ENCODE measurements at regions of chr9 and their contacts with region 1.

Region 1: GRCh38 chr9:108786901-108787689 is 68.7 kb downstream of the ACTL7B start:
- DNase-seq: no peak
- H3K4me3 ChIP-seq: no peak overlapping the region
- H3K27ac ChIP-seq: no peak overlapping the region
- H3K4me1 ChIP-seq: no peaks in the 10 kb centered on the region
- H3K27me3 ChIP-seq: no peaks in the 10 kb centered on the region
- CTCF ChIP-seq: no peak
- EP300 ChIP-seq: no peak
- POLR2A ChIP-seq: no peak

Region 2: DNA sequence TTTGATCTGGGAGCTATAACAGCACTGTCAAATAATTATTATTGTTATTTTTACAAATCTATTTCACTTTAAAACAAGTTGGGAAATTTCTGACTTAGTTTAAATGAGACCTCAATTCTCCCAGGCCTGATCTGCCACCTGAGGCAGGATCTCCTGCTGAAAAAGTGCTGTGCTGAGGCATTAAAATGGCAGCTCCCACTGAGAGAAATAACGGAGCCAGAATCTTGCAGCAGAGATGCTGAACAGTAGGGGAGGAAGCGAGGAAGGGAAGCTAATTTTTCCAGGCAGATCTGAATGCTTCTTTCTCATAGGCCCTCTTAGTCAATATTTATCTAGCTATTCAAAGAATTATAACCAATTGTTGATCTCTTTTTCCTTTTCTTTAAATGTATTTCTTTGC is 1727.9 kb before region 1 on chr9:
- intact Hi-C with region 1: loop called in 1 of 4 experiments (anchors 10 kb)
- DNase-seq: no peak
- H3K4me3 ChIP-seq: no peak overlapping the region
- H3K27ac ChIP-seq: no peak overlapping the region
- H3K4me1 ChIP-seq: no peaks in the 10 kb centered on the region
- H3K27me3 ChIP-seq: no peaks in the 10 kb centered on the region
- CTCF ChIP-seq: no peak
- EP300 ChIP-seq: no peak
- POLR2A ChIP-seq: no peak

Region 3: DNA sequence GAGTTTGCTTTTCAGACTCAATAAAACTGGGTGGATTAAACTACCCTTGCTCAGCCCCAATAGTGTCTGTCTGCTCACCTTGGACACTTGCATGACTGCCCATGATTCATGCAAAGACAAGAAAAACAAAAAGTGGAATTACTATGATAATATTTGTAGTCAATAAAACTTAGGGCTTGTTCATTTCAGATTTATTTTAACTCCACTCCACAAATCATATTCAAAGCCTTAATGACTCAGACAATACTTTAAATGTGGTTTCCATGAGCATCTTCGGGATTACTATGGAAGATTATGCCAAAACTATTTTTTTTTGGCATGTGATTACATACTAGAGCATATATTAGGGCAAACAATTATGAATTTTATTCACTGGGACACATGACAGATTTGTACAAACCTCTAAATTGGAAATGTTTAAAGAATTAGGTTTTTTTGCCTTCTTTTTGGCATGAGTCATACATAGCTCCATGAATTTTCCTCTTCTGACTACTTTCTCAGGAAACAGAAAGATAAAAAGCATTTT is 400.2 kb before region 1 on chr9:
- intact Hi-C with region 1: no loop called
- DNase-seq: no peak
- H3K4me3 ChIP-seq: no peak overlapping the region
- H3K27ac ChIP-seq: no peak overlapping the region
- H3K4me1 ChIP-seq: no peaks in the 10 kb centered on the region
- H3K27me3 ChIP-seq: no peaks in the 10 kb centered on the region
- CTCF ChIP-seq: no peak
- EP300 ChIP-seq: no peak
- POLR2A ChIP-seq: no peak

Region 4: GRCh38 chr9:108727580-108728111 is 59.4 kb before region 1 on chr9:
- intact Hi-C with region 1: no loop called
- DNase-seq: no peak
- H3K4me3 ChIP-seq: no peak overlapping the region
- H3K27ac ChIP-seq: no peak overlapping the region
- H3K4me1 ChIP-seq: no peaks in the 10 kb centered on the region
- H3K27me3 ChIP-seq: no peaks in the 10 kb centered on the region
- CTCF ChIP-seq: no peak
- EP300 ChIP-seq: no peak
- POLR2A ChIP-seq: no peak

Region 5: GRCh38 chr9:108842610-108843295 is 55.7 kb after region 1 on chr9:
- intact Hi-C with region 1: no loop called
- DNase-seq: no peak
- H3K4me3 ChIP-seq: no peak overlapping the region
- H3K27ac ChIP-seq: no peak overlapping the region
- H3K4me1 ChIP-seq: no peaks in the 10 kb centered on the region
- H3K27me3 ChIP-seq: no peaks in the 10 kb centered on the region
- CTCF ChIP-seq: no peak
- EP300 ChIP-seq: no peak
- POLR2A ChIP-seq: no peak